Esophagus muscularis mucosa (tissue), 4 donors: ENCODE measurements at regions of chr1 and their contacts with region 1.

Region 1: DNA sequence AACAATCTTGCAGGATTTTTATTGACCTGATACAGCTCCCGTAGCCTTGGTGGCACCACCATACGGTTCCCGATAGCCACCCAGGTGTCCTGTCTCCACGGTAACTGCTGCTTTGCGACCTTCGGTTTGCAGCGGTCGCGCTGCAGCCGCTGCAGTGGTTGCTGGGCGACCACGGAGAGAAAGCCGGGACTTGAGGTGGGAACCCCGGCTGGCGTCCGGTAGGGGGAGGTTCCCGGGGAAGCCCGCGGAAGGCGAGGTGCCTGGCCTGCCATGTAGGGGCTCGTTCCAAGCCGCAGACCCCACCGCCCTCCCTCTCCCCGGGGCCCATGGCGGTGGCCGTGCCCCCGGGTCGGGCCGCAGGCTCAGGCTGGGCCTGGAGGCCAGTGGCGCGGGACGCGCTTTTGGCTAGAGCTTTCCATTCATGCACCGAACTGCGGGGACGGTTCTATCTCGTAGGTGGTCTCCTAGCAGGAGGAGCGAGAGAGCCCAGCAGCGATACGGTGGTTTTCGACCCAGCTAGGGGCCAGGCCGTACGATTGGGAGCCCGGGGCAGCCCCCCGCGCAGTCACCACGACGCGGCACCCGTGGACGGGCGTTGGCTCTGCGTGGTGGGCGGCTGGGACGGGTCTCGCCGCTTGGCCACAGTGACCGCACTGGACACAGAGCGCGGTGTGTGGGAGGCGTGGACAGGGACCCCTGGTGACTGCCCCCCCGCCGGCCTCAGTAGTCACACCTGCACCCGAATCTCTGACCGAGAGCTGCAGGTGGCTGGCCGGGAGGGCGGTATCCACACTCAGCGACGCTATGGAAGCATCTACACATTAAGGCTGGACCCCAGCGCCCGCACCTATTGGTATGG is at the start of gene KLHDC9:
- DNase-seq: no peak
- H3K4me3 ChIP-seq: peak within 1 kb of the TSS; percentile 68 to 79 (median 78)
- H3K27ac ChIP-seq: peak within 1 kb of the TSS; percentile 71 to 81 (median 78)
- H3K4me1 ChIP-seq: peaks cover 18 to 29% (median 24%) of the 10 kb centered on the region in 4 donors
- H3K27me3 ChIP-seq: peaks cover 0 to 3% (median 0%) of the 10 kb centered on the region in 4 donors
- CTCF ChIP-seq: peak in 1 of 3 experiments; percentile 19
- EP300 ChIP-seq: no peak
- POLR2A ChIP-seq: no peak
- total RNA-seq, gene KLHDC9: 5.1 to 8.3 (median 7.6) TPM

Region 2: GRCh38 chr1:160726498-160727315 is 371.7 kb before region 1 on chr1:
- intact Hi-C with region 1: loop called (anchors 5 kb)
- DNase-seq: no peak
- H3K4me3 ChIP-seq: no peak overlapping the region
- H3K27ac ChIP-seq: no peak overlapping the region
- H3K4me1 ChIP-seq: peaks cover 0 to 5% (median 0%) of the 10 kb centered on the region in 4 donors
- H3K27me3 ChIP-seq: no peaks in the 10 kb centered on the region
- CTCF ChIP-seq: peak; percentile 47 to 68 (median 49)
- EP300 ChIP-seq: no peak
- POLR2A ChIP-seq: no peak

Region 3: GRCh38 chr1:160837558-160838205 is 260.8 kb before region 1 on chr1:
- intact Hi-C with region 1: no loop called
- DNase-seq: no peak
- H3K4me3 ChIP-seq: no peak overlapping the region
- H3K27ac ChIP-seq: peak overlapping the region in 2 of 4 donors; percentile 11 to 39
- H3K4me1 ChIP-seq: peaks cover 0 to 10% (median 3%) of the 10 kb centered on the region in 4 donors
- H3K27me3 ChIP-seq: peaks cover 0 to 5% (median 0%) of the 10 kb centered on the region in 4 donors
- CTCF ChIP-seq: no peak
- EP300 ChIP-seq: no peak
- POLR2A ChIP-seq: no peak

Region 4: DNA sequence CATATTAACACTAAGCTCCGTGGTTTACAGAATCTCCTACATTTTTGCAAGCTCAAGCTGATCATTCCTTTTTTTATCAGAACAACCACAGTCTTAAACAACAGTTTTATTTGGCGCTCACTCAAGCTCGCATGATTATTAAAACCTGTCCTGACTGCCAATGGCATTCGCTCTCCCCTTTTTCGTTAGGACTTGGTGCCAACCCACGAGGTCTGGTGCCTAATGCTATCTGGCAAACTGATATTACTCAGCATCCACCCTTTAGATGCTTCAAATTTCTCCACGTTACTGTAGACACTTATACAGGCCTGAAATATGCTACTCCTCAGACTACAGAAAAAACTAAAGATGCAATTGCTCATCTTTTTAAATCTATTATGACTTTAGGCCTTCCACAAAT is 190.5 kb before region 1 on chr1:
- intact Hi-C with region 1: no loop called
- DNase-seq: no peak
- H3K4me3 ChIP-seq: no peak overlapping the region
- H3K27ac ChIP-seq: no peak overlapping the region
- H3K4me1 ChIP-seq: peaks cover 0 to 11% (median 0%) of the 10 kb centered on the region in 4 donors
- H3K27me3 ChIP-seq: no peaks in the 10 kb centered on the region
- CTCF ChIP-seq: no peak
- EP300 ChIP-seq: no peak
- POLR2A ChIP-seq: no peak

Region 5: DNA sequence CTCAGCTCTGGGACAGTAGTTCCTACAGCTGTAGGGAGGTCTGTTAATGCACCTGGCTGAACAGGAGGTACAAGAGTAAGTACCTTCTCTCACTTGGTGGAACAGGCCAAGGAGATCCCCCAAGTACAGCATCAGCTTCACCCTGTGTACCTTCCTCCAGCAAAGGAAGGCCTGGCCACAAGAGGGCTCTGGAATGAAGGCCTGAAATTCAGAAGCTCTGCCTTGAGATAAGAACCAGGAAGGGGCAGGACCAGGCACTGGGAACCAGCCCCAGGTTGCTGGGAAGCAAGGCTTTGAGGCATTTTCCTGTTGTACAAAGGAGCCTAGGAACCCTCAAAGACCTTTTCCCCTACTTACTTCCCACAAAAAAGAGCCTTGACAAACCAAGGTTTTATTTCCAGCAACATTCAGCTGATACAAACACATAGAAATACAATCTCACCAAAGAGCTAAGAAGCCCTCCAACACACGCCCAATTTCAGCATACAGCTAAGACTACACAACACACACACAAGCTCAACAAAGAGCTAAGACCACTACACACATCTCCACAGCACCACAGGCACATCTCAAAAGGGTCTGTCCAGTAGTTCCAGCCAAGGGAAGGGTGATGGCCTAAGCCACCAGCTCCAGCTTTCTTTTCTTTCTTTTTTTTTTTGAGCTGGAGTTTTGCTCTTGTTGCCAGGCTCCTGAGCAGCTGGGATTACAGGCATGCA is 101.0 kb before region 1 on chr1:
- intact Hi-C with region 1: loop called (anchors 5 kb)
- DNase-seq: no peak
- H3K4me3 ChIP-seq: no peak overlapping the region
- H3K27ac ChIP-seq: peak overlapping the region in 3 of 4 donors; percentile 5 to 58 (median 48)
- H3K4me1 ChIP-seq: peaks cover 0 to 10% (median 0%) of the 10 kb centered on the region in 4 donors
- H3K27me3 ChIP-seq: no peaks in the 10 kb centered on the region
- CTCF ChIP-seq: peak; percentile 24 to 54 (median 25)
- EP300 ChIP-seq: no peak
- POLR2A ChIP-seq: no peak

Region 6: DNA sequence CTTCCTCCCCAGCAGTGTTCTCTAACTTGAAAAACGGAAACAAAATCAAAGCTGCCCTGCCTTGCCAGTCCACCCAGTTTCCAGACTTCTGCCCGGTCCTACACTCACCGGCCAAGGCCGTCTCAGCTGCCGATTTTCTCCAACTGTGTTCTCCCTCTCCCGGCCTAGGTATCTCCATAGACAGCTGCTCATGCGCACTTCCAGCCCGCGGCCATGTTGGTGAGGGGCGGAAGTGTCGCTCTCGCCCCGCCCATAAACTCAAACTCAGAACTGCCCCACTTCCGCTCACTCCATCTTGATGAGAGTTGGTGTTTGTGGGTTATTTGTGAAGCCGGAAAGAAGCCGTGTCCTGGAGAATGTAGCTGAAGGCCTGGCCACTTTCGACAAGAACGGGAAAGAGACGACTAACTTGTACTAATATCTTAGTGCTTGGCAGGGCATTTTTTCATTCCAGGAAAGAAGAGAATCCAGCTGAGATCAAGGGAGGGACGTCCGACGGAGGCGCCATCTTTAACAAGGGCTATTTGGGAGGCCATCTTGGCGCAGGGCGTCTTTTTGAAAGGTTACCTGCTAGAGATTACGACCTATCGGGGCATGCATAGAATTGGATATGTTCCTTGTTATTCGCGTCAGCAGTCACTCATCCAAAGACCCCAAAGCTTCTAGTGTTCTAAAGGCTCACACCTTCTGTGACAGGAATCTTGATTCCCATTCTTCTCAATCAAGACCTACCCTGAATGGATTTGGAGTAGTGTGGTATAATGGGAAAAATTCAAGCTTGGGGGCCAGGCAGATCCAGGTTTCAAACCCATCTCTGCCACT is 52.5 kb before region 1 on chr1 and contains the start of gene USF1:
- intact Hi-C with region 1: loop called (anchors 5 kb)
- DNase-seq: peak; percentile 99
- H3K4me3 ChIP-seq: peak within 1 kb of the TSS; percentile 80 to 95 (median 88)
- H3K27ac ChIP-seq: peak within 1 kb of the TSS; percentile 91 to 96 (median 94)
- H3K4me1 ChIP-seq: peaks cover 11 to 24% (median 21%) of the 10 kb centered on the region in 4 donors
- H3K27me3 ChIP-seq: peaks cover 0 to 10% (median 0%) of the 10 kb centered on the region in 4 donors
- CTCF ChIP-seq: peak in 1 of 3 experiments; percentile 10
- EP300 ChIP-seq: no peak
- POLR2A ChIP-seq: no peak
- total RNA-seq, gene USF1: 36.5 to 54.2 (median 48.7) TPM

Region 7: GRCh38 chr1:161153679-161154426 is 55.4 kb after region 1 on chr1 and contains the start of gene UFC1:
- intact Hi-C with region 1: no loop called
- DNase-seq: peak; percentile 95
- H3K4me3 ChIP-seq: peak within 1 kb of the TSS; percentile 63 to 73 (median 64)
- H3K27ac ChIP-seq: peak within 1 kb of the TSS; percentile 84 to 92 (median 85)
- H3K4me1 ChIP-seq: peaks cover 14 to 31% (median 25%) of the 10 kb centered on the region in 4 donors
- H3K27me3 ChIP-seq: no peaks in the 10 kb centered on the region
- CTCF ChIP-seq: no peak
- EP300 ChIP-seq: no peak
- POLR2A ChIP-seq: no peak
- total RNA-seq, gene UFC1: 62.8 to 86.1 (median 71.6) TPM

Region 8: DNA sequence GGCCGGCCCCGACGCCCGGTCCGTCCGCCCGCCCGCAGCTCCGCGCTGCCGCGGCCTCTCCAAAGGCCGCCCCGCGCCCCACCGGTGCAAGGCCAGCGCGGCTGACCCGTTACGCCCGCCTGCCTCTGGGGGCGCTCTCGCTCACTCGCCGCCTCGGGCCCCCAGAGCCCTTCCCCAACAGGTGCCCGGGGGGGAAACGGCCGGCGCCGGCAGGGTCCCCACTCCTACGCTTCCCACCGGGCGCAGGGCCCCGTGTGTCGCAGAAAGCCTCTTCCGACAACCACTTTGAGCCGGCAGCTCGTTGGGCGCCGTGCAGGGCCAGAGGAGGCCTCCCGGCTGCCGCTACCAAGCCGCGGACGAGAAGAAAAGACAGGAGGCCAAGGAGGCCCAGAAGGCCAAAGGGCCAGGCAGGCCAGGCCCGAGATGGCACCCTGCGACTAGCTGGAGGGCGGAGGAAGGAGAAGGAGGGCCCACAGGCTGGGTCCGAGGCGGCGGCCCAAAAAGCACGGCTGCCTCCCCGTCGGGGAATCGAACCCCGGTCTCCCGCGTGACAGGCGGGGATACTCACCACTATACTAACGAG is 342.0 kb after region 1 on chr1:
- intact Hi-C with region 1: no loop called
- DNase-seq: no peak
- H3K4me3 ChIP-seq: peak overlapping the region; percentile 53 to 80 (median 62)
- H3K27ac ChIP-seq: peak overlapping the region in 3 of 4 donors; percentile 33 to 55 (median 38)
- H3K4me1 ChIP-seq: peaks cover 0 to 13% (median 11%) of the 10 kb centered on the region in 4 donors
- H3K27me3 ChIP-seq: peaks cover 0 to 58% (median 13%) of the 10 kb centered on the region in 4 donors
- CTCF ChIP-seq: peak; percentile 23 to 43 (median 39)
- EP300 ChIP-seq: no peak
- POLR2A ChIP-seq: no peak